ENCODE measurements at regions of chr6 and their contacts with region 1.

Region 1: GRCh38 chr6:52233975-52234823 is 10.1 kb downstream of the IL17F start:
- DNase-seq: peak; percentile 74
- ATAC-seq: peak; percentile 83
- H3K4me3 Mint-ChIP-seq: no peak overlapping the region
- H3K27ac Mint-ChIP-seq: no peak overlapping the region
- H3K4me1 Mint-ChIP-seq: peaks cover 21% of the 10 kb centered on the region
- H3K27me3 Mint-ChIP-seq: peaks cover 29% of the 10 kb centered on the region

Region 2: GRCh38 chr6:52098634-52099185 is 135.5 kb before region 1 on chr6:
- CTCF ChIA-PET with region 1: interaction called, 13 read pairs
- POLR2A ChIA-PET with region 1: no interaction called
- intact Hi-C with region 1: loop called in 1 of 2 experiments (anchors 1 kb)
- DNase-seq: no peak
- ATAC-seq: peak; percentile 58
- H3K4me3 Mint-ChIP-seq: no peak overlapping the region
- H3K27ac Mint-ChIP-seq: no peak overlapping the region
- H3K4me1 Mint-ChIP-seq: peaks cover 2% of the 10 kb centered on the region
- H3K27me3 Mint-ChIP-seq: peaks cover 33% of the 10 kb centered on the region

Region 3: DNA sequence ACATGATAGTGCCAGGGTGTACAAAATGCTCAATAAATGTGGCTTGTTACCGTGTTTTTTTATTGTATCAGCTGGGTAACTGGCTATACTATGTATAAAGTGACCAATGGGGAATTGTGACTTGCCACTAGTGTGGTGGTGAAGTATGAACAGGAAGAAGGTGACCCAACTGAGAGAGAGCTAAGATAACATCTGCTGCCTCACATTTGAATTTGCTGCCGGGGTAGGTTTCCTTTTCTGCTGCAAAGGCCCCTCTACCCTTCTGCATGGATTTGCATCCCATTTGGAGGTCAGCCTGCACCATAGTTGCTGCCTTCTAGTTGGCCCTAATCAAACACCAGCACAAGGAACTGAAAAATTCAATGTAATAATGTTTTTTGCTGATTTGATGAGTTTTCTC is 24.0 kb before region 1 on chr6:
- CTCF ChIA-PET with region 1: interaction called, 11 read pairs
- POLR2A ChIA-PET with region 1: no interaction called
- intact Hi-C with region 1: no loop called
- DNase-seq: no peak
- ATAC-seq: peak; percentile 14
- H3K4me3 Mint-ChIP-seq: no peak overlapping the region
- H3K27ac Mint-ChIP-seq: peak overlapping the region; percentile 44
- H3K4me1 Mint-ChIP-seq: peaks cover 22% of the 10 kb centered on the region
- H3K27me3 Mint-ChIP-seq: peaks cover 10% of the 10 kb centered on the region

Measured in activated CD4-positive, alpha-beta T cell treated with anti-CD3 and anti-CD28 coated beads for 36 hours (primary cell).